Sciatic nerve (tissue), 2 donors: ENCODE measurements at regions of chr13 and their contacts with region 1.

Region 1: GRCh38 chr13:49669735-49670309 is 21.5 kb downstream of the EBPL start:
- DNase-seq: no peak
- ATAC-seq: peak; percentile 91

Region 2: DNA sequence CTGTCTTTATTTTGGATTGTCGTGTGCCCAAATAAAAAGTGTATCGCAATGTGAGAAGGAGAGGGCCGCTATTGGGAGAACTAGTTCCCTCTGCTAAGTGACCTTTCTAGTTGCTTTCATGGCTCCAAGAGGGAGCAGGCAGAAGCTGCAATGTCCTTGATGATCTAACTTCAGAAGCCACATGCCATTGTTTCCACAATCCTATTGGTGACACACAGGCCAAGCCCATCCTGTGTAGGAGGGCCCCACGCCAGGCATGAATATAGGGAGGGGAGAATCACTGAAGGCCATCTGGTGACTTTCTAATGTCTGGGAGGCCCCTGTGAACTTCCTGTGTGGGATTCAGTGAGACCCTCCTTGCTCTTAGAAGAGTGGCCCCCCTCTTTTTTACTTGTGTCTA is 170.4 kb after region 1 on chr13:
- intact Hi-C with region 1: loop called (anchors 5 kb)
- DNase-seq: no peak
- ATAC-seq: no peak

Region 3: GRCh38 chr13:51269039-51269438 is 1599.2 kb after region 1 on chr13:
- intact Hi-C with region 1: no loop called
- DNase-seq: no peak
- ATAC-seq: no peak